Activated T-helper 2 cell treated with anti-CD3 and anti-CD28 coated beads, Interferon-gamma antibody, Interleukin-2, Interleukin-4, amounts not matched to agents 10 μg/mL and 5 μg/mL and 100 μg/mL, durations not matched to agents 14 hours and 24 hours and 36 hours (primary cell): ENCODE measurements at regions of chr15 and their contacts with region 1.

Region 1: DNA sequence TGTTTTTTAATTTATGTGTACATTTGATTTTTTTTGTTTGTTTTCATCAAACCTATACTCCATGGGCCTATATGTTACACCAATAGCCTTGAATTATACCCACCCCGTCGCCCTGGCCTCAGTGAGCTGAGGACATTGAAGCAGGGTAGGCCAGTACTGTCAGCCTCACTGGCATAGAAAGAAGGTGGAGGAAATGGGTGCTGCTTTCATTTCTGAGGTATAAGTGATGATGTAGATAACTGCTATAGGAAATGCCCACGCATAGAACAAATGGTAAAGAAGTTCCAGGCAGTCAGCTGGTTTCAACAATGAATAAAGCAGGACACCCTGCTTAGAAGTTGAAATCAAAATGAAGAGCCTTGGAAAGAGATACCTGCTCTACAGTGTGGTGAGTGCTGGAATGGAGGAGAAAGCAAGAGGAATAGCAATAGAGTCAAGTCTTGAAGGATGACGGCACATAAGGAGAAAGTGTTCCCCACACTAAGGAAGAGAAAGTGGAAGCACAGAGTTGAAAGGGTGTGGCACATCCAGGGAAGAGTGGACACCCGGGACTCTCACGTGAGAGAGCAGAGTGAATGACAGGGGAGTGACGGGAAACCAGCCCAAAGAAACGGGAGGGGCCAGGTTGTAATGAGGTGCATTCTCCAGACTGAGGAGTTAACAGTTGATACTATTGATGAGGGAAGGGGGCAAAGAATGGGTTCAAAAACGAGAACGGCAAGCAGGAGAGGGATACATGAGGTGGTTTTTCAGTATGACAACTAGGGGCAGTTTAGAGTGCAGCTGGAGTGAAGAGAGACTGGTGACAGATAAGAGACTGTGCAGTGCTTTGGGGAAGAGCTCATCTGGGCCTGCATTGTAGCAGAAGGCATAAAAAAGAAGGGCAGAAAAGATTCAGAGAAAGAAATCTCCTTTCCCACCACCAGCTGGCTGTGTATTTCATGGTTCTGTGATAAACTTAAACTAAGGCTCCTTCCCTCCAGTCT is 70.5 kb downstream of the KLHL25 start:
- DNase-seq: no peak
- H3K4me3 Mint-ChIP-seq: peak overlapping the region; percentile 58
- H3K27ac Mint-ChIP-seq: peak overlapping the region; percentile 91
- H3K4me1 Mint-ChIP-seq: peaks cover 39% of the 10 kb centered on the region
- H3K27me3 Mint-ChIP-seq: no peaks in the 10 kb centered on the region

Region 2: GRCh38 chr15:85485956-85486567 is 238.2 kb before region 1 on chr15:
- intact Hi-C with region 1: loop called (anchors 2 kb)
- DNase-seq: peak; percentile 40
- H3K4me3 Mint-ChIP-seq: no peak overlapping the region
- H3K27ac Mint-ChIP-seq: no peak overlapping the region
- H3K4me1 Mint-ChIP-seq: peaks cover 60% of the 10 kb centered on the region
- H3K27me3 Mint-ChIP-seq: no peaks in the 10 kb centered on the region

Region 3: DNA sequence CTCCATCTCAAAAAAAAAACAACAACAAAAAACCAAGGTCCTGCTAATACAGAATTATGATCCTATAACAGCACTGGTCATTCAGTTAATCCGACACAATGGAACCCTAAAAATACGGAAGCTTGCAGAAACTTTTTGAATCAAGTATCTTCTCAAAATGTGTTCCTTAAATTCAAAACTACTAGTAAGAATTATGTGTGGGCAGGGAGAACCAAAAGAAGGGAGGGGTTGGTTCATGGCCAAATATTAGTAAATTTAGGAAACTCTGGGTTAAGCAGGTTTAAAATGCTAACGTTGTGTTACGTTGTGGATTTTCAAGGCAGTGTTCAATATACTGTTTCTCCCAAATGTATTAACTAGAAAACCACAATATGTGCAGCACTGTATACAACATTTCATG is 45.0 kb before region 1 on chr15:
- intact Hi-C with region 1: no loop called
- DNase-seq: no peak
- H3K4me3 Mint-ChIP-seq: no peak overlapping the region
- H3K27ac Mint-ChIP-seq: no peak overlapping the region
- H3K4me1 Mint-ChIP-seq: peaks cover 16% of the 10 kb centered on the region
- H3K27me3 Mint-ChIP-seq: no peaks in the 10 kb centered on the region

Region 4: DNA sequence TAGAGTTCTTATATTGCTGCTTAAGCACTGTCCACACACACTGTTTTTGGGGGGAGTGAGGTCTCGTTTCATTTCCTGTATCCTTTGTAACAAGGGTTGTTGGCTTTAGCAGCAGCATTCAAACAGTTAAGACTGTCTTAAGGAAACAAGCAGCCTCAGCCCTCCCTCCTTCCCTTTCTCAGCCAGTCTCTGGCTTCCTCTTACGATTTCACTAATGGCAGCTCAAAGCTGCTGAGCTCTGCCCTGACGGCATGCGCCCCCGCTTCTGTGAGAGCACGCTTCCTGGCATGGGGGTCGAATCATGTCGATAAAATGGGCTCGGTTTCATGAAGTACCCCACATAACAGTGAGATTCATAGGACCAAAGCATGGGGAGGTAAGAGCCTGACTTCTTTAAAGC is 34.5 kb before region 1 on chr15:
- intact Hi-C with region 1: loop called (anchors 1 kb)
- DNase-seq: peak; percentile 64
- H3K4me3 Mint-ChIP-seq: peak overlapping the region; percentile 94
- H3K27ac Mint-ChIP-seq: peak overlapping the region; percentile 100
- H3K4me1 Mint-ChIP-seq: peaks cover 70% of the 10 kb centered on the region
- H3K27me3 Mint-ChIP-seq: no peaks in the 10 kb centered on the region

Region 5: DNA sequence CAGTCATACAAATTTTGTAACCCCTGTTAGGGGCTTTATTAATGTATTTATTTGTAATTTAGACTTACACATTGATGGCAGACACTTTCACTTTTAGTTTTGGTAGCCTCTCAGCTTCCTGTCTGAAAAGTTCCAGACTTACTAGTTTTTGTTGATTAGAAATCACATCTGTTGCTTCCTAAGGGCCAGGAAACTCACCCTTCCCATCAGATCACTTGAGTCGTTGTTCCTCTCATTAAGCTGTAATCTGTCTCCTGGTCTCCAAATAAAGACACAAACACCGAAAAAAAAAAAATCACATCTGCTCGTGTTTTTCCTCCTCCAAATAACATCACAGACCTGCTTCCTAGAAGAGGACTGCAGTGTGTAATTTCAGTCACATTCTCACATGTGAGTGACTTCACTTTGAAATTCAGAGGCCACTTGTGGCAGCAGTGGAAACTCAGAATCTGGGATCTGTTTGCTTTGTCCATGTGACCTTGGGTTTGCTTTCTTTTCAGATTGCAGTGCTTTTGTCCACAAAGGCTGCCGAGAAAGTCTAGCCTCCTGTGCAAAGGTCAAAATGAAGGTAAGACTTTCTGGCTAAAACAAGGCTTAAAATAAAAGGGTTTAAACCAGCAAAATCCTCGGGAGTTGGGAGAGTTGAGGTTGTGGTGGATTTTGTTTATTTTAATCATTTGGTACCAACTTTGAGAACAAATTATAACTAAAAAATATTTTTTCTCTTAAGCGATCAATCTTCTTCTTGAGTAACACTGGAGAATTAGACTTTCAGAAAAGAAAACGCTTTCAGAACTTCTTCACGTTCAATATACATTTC is 16.5 kb before region 1 on chr15:
- intact Hi-C with region 1: loop called (anchors 1 kb)
- DNase-seq: no peak
- H3K4me3 Mint-ChIP-seq: peak overlapping the region; percentile 80
- H3K27ac Mint-ChIP-seq: peak overlapping the region; percentile 98
- H3K4me1 Mint-ChIP-seq: peaks cover 74% of the 10 kb centered on the region
- H3K27me3 Mint-ChIP-seq: no peaks in the 10 kb centered on the region

Region 6: DNA sequence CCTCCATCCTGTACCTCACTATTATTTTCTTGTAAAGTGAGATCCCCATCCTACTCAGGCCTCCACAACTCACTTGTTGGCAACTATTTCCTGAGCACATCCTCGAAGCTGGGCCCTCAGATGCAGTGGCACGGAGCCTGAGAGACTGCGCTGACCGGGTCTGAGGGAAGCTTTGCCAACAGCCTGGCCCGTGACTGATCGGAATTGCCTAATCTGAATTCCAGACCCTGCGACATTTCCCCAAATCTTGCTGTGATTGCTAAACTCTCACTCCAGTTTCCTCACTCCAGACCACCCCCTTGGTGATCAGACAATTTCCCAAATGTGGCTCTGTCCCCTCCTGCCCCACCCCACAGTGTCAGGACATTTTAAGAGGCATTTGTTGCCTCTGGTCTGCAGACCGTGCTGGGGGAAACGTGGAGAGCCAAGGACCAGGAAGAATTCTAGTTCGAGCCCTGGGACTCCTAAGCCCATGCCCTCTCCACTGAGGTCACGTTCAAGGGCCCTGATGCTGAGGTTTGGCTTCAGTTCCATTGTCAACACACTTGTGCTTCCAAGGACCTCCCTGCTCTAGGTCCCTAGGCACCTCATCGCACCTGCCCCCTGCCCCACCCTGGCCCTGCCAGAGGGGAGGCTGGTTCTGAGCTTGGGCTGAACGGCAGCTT is 47.7 kb after region 1 on chr15:
- intact Hi-C with region 1: no loop called
- DNase-seq: no peak
- H3K4me3 Mint-ChIP-seq: no peak overlapping the region
- H3K27ac Mint-ChIP-seq: no peak overlapping the region
- H3K4me1 Mint-ChIP-seq: peaks cover 2% of the 10 kb centered on the region
- H3K27me3 Mint-ChIP-seq: no peaks in the 10 kb centered on the region